Activated T-helper 1 cell treated with anti-CD3 and anti-CD28 coated beads, Interleukin-12 subunit alpha, Interleukin-12 subunit beta, Interleukin-2, Interleukin-4 antibody, amounts not matched to agents 30 ng/mL and 10 ng/mL and 1 ng/mL, durations not matched to agents 14 hours and 24 hours and 36 hours (primary cell): ENCODE measurements at regions of chr19 and their contacts with region 1.

Region 1: DNA sequence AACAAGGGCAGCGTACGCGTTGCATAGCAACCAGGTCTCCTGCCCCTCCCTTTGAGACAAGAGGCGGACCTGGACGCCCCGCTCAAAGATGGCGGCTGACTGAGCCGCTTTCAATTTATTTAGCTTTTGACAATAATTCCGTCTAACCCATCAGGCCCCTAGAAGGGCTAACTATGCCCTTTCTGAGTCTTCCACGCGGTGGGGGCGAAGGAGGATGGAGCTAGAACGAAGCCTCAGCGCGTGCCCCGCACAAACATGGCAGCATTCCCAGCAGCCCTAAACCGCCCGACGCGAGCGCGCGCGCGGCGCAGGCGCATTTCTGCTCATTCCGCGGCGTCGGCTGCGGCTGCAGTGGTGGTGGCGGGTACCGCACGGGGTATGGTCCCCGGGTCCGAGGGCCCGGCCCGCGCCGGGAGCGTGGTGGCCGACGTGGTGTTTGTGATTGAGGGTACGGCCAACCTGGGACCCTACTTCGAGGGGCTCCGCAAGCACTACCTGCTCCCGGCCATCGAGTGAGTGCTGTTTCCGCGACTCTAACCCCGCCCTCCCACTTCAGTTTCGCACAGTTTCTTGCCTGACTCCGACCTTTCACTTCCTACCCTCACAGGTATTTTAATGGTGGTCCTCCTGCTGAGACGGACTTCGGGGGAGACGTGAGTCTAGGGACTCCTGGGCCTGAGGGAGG is at the start of gene MED25:
- DNase-seq: peak; percentile 88
- H3K4me3 Mint-ChIP-seq: peak within 1 kb of the TSS; percentile 94
- H3K27ac Mint-ChIP-seq: peak within 1 kb of the TSS; percentile 93
- H3K4me1 Mint-ChIP-seq: peaks cover 25% of the 10 kb centered on the region
- H3K27me3 Mint-ChIP-seq: no peaks in the 10 kb centered on the region
- total RNA-seq, gene MED25: 54.2 and 54.5 TPM in 2 replicates

Region 2: DNA sequence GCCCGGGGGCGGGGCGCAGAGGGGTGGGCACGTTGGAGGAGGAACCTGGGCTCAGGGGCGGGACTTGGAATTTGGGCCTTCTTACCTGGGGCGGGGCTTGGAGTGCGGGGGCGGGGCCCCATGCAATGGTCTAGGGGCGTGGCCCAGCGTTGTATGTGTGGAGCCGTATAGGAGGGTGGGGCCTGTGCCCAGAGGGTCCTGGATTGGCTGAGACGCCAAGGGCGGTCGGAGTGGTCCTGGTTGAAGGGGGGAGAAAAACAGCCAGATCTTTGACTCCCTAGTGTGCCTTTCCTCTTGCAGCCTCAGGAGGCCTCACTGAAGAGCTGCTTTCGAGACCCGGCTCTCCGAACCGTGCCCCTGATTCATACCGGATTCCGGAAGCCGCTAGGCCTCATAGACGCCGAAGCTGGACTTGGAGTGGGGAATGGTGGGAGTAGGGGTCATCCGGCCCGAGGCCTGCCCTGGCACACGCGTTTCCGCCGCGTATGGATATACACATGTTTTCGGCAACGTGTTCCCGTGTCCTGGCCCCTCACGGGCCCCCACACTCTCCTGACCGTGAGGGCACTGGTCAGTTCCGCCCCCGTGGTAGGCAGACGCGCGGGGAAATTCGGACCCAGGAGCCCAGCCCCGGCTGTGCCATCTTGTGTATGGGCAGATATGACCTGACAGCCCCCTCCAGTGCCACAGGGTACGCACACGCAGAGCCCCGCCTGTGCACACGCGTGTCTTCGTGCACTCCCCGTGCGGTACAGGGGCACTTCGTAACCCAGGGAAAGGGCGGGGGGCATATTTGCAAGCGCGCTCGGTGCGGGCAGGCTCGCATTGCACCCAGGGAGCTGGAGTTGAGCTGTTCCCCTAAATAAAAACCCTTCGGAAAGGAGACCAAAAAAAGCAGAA is 227.8 kb before region 1 on chr19:
- intact Hi-C with region 1: loop called (anchors 10 kb)
- DNase-seq: peak; percentile 93
- H3K4me3 Mint-ChIP-seq: peak overlapping the region; percentile 88
- H3K27ac Mint-ChIP-seq: peak overlapping the region; percentile 84
- H3K4me1 Mint-ChIP-seq: peaks cover 40% of the 10 kb centered on the region
- H3K27me3 Mint-ChIP-seq: peaks cover 10% of the 10 kb centered on the region

Region 3: DNA sequence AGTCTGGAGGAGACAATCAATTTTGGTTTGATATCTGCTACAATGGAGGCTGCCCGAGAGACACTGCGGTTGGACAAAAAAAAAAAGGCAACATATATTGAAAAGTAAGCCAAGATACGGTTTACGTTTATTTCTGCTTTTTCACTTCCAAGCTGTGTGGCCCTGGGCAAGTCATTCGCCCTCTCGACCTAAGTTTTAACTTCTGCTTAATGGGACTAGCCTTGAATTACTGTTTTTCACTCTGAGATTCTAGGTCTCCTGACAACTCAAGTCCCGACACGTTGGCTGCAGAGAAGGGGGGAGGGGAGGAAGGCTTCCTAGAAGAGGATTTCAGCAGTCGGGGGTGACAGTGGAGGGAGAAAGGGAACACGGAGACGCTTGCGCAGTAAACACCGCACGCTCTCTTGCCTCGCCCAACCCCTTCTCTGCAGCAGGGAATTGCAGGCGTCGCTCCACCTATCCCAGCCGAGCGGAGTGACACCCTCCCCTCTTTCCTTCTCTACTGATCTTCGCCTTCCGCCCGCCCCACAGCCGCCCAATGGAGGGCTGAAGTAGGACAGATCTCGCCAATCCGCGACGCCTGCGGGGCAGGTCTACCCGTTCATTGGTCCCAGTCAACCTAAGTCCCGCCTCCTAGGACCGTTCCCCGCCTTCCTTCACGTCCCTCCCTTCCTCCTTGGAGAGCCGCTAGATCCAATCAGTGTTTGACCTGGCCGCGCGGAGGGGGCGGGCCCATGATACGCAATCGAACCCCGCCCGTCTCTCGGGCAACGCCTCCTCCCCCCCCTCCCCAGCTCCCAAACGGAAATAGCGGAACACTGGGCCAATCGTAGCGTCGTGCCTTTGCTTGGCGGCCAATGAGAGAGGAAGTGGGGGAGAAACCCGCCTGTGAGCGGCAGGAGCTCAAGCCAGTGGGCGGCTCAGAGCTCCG is 51.8 kb before region 1 on chr19:
- intact Hi-C with region 1: loop called (anchors 1 kb)
- DNase-seq: peak; percentile 99
- H3K4me3 Mint-ChIP-seq: peak overlapping the region; percentile 89
- H3K27ac Mint-ChIP-seq: peak overlapping the region; percentile 91
- H3K4me1 Mint-ChIP-seq: peaks cover 24% of the 10 kb centered on the region
- H3K27me3 Mint-ChIP-seq: no peaks in the 10 kb centered on the region

Region 4: DNA sequence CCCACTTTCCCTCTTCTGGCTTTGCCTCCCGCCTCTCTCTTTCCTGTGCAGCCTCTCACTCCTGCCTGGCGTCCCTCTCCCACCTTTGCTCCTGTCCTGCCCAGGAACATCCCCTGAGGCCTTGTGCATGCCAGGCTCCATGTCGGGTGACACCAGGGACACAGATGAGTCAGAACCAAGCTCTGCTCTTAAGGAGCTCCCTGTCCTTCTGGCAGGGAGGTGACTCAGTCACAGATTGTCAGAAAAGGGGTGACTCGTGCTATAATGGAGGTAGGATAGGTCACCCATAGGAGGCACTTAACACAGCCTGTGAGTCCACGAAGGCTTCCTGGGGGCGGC is 24.7 kb before region 1 on chr19:
- intact Hi-C with region 1: no loop called
- DNase-seq: no peak
- H3K4me3 Mint-ChIP-seq: no peak overlapping the region
- H3K27ac Mint-ChIP-seq: peak overlapping the region; percentile 61
- H3K4me1 Mint-ChIP-seq: peaks cover 5% of the 10 kb centered on the region
- H3K27me3 Mint-ChIP-seq: no peaks in the 10 kb centered on the region

Region 5: GRCh38 chr19:49869441-49870176 is 51.5 kb after region 1 on chr19:
- intact Hi-C with region 1: loop called (anchors 1 kb)
- DNase-seq: peak; percentile 92
- H3K4me3 Mint-ChIP-seq: no peak overlapping the region
- H3K27ac Mint-ChIP-seq: no peak overlapping the region
- H3K4me1 Mint-ChIP-seq: peaks cover 36% of the 10 kb centered on the region
- H3K27me3 Mint-ChIP-seq: no peaks in the 10 kb centered on the region

Region 6: GRCh38 chr19:49889687-49890348 is 71.7 kb after region 1 on chr19:
- intact Hi-C with region 1: no loop called
- DNase-seq: peak; percentile 74
- H3K4me3 Mint-ChIP-seq: peak overlapping the region; percentile 80
- H3K27ac Mint-ChIP-seq: peak overlapping the region; percentile 77
- H3K4me1 Mint-ChIP-seq: peaks cover 13% of the 10 kb centered on the region
- H3K27me3 Mint-ChIP-seq: peaks cover 1% of the 10 kb centered on the region